ENCODE measurements at regions of chr6 and their contacts with region 1.

Region 1: DNA sequence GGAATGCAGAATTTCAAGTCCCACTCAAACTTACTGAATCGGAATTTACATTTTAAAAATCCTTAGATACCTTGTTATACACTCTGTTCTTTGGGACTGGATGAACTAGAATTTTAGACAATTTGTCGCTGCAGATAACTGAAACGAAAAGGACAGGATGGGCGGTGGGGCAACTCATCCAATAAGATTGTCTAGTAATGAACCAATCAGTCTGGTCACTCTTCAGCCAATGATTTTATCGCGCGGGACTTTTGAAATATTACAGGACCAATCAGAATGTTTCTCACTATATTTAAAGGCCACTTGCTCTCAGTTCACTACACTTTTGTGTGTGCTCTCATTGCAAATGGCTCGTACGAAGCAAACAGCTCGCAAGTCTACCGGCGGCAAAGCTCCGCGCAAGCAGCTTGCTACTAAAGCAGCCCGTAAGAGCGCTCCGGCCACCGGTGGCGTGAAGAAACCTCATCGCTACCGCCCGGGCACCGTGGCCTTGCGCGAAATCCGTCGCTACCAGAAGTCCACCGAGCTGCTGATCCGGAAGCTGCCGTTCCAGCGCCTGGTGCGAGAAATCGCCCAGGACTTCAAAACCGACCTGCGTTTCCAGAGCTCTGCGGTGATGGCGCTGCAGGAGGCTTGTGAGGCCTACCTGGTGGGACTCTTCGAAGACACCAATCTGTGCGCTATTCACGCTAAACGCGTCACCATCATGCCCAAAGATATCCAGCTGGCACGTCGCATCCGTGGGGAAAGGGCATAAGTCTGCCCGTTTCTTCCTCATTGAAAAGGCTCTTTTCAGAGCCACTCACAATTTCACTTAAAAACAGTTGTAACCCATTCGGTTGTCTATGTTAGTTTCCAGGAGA is 41.9 kb upstream of the HFE start:
- DNase-seq: peak; percentile 49 to 96 (median 74)
- ATAC-seq: peak; percentile 55
- H3K4me3 ChIP-seq: peak overlapping the region; percentile 70
- H3K4me3 Mint-ChIP-seq: peak overlapping the region; percentile 97
- H3K27ac ChIP-seq: peak overlapping the region; percentile 71 to 91
- H3K27ac Mint-ChIP-seq: peak overlapping the region; percentile 94
- H3K4me1 ChIP-seq: peaks cover 21% of the 10 kb centered on the region
- H3K4me1 Mint-ChIP-seq: peaks cover 28% of the 10 kb centered on the region
- H3K27me3 ChIP-seq: no peaks in the 10 kb centered on the region
- H3K27me3 Mint-ChIP-seq: no peaks in the 10 kb centered on the region
- CTCF ChIP-seq: no peak

Region 2: GRCh38 chr6:25576919-25577318 is 468.4 kb before region 1 on chr6:
- CTCF ChIA-PET with region 1: no interaction called
- POLR2A ChIA-PET with region 1: no interaction called
- intact Hi-C with region 1: no loop called
- DNase-seq: no peak
- ATAC-seq: no peak
- H3K4me3 ChIP-seq: no peak overlapping the region
- H3K4me3 Mint-ChIP-seq: no peak overlapping the region
- H3K27ac ChIP-seq: no peak overlapping the region
- H3K27ac Mint-ChIP-seq: no peak overlapping the region
- H3K4me1 ChIP-seq: peaks cover 5% of the 10 kb centered on the region
- H3K4me1 Mint-ChIP-seq: peaks cover 10% of the 10 kb centered on the region
- H3K27me3 ChIP-seq: no peaks in the 10 kb centered on the region
- H3K27me3 Mint-ChIP-seq: no peaks in the 10 kb centered on the region
- CTCF ChIP-seq: no peak

Region 3: GRCh38 chr6:26020329-26021000 is 24.8 kb before region 1 on chr6:
- CTCF ChIA-PET with region 1: interaction called, 40 read pairs
- POLR2A ChIA-PET with region 1: interaction called, 919 read pairs
- intact Hi-C with region 1: no loop called
- DNase-seq: peak; percentile 63 to 96 (median 78)
- ATAC-seq: peak; percentile 50
- H3K4me3 ChIP-seq: peak overlapping the region; percentile 73
- H3K4me3 Mint-ChIP-seq: peak overlapping the region; percentile 95
- H3K27ac ChIP-seq: peak overlapping the region; percentile 95 to 96
- H3K27ac Mint-ChIP-seq: peak overlapping the region; percentile 97
- H3K4me1 ChIP-seq: peaks cover 38% of the 10 kb centered on the region
- H3K4me1 Mint-ChIP-seq: peaks cover 41% of the 10 kb centered on the region
- H3K27me3 ChIP-seq: no peaks in the 10 kb centered on the region
- H3K27me3 Mint-ChIP-seq: no peaks in the 10 kb centered on the region
- CTCF ChIP-seq: no peak

Region 4: DNA sequence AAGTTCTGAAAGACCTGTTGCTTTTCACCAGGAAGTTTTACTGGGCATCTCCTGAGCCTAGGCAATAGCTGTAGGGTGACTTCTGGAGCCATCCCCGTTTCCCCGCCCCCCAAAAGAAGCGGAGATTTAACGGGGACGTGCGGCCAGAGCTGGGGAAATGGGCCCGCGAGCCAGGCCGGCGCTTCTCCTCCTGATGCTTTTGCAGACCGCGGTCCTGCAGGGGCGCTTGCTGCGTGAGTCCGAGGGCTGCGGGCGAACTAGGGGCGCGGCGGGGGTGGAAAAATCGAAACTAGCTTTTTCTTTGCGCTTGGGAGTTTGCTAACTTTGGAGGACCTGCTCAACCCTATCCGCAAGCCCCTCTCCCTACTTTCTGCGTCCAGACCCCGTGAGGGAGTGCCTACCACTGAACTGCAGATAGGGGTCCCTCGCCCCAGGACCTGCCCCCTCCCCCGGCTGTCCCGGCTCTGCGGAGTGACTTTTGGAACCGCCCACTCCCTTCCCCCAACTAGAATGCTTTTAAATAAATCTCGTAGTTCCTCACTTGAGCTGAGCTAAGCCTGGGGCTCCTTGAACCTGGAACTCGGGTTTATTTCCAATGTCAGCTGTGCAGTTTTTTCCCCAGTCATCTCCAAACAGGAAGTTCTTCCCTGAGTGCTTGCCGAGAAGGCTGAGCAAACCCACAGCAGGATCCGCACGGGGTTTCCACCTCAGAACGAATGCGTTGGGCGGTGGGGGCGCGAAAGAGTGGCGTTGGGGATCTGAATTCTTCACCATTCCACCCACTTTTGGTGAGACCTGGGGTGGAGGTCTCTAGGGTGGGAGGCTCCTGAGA is 42.2 kb after region 1 on chr6 and contains the start of gene HFE:
- CTCF ChIA-PET with region 1: no interaction called
- POLR2A ChIA-PET with region 1: interaction called, 27 read pairs
- intact Hi-C with region 1: no loop called
- DNase-seq: peak in 11 of 14 experiments; percentile 3 to 57 (median 21)
- ATAC-seq: peak; percentile 25
- H3K4me3 ChIP-seq: peak within 1 kb of the TSS; percentile 86
- H3K4me3 Mint-ChIP-seq: peak within 1 kb of the TSS; percentile 87
- H3K27ac ChIP-seq: peak within 1 kb of the TSS; percentile 23 to 61
- H3K27ac Mint-ChIP-seq: peak within 1 kb of the TSS; percentile 71
- H3K4me1 ChIP-seq: peaks cover 33% of the 10 kb centered on the region
- H3K4me1 Mint-ChIP-seq: peaks cover 34% of the 10 kb centered on the region
- H3K27me3 ChIP-seq: no peaks in the 10 kb centered on the region
- H3K27me3 Mint-ChIP-seq: no peaks in the 10 kb centered on the region
- CTCF ChIP-seq: no peak
- total RNA-seq, gene HFE: 0.08 to 0.28 TPM

Region 5: DNA sequence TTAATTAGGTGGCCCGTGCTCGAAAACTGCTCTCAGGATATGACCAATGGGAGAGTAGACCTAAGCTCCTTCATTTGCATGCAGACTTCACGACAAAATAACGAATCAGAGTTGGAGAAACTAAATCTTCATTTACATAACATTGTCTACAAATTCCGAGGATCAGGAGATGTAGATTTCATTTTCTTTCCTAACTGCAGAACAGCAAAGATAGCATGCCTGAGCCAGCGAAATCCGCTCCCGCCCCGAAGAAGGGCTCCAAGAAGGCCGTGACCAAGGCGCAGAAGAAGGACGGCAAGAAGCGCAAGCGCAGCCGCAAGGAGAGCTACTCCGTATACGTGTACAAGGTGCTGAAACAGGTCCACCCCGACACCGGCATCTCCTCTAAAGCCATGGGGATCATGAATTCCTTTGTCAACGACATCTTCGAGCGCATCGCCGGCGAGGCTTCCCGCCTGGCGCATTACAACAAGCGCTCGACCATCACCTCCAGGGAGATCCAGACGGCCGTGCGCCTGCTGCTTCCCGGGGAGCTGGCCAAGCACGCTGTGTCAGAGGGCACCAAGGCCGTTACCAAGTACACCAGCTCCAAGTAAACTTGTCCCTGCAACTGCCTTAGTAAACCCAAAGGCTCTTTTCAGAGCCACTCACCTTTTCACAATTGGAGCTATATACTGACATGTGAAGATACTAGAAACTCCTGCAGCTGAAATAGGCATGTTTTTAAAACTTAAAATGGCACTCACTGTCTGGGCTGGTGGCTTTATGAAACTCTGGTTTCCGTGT is 138.5 kb after region 1 on chr6:
- CTCF ChIA-PET with region 1: interaction called, 4 read pairs
- POLR2A ChIA-PET with region 1: interaction called, 25 read pairs
- intact Hi-C with region 1: no loop called
- DNase-seq: peak in 13 of 14 experiments; percentile 20 to 94 (median 48)
- ATAC-seq: peak; percentile 89
- H3K4me3 ChIP-seq: peak overlapping the region; percentile 62
- H3K4me3 Mint-ChIP-seq: peak overlapping the region; percentile 99
- H3K27ac ChIP-seq: peak overlapping the region; percentile 43 to 72
- H3K27ac Mint-ChIP-seq: peak overlapping the region; percentile 86
- H3K4me1 ChIP-seq: peaks cover 34% of the 10 kb centered on the region
- H3K4me1 Mint-ChIP-seq: peaks cover 42% of the 10 kb centered on the region
- H3K27me3 ChIP-seq: no peaks in the 10 kb centered on the region
- H3K27me3 Mint-ChIP-seq: no peaks in the 10 kb centered on the region
- CTCF ChIP-seq: no peak

Region 6: GRCh38 chr6:26249957-26250697 is 204.8 kb after region 1 on chr6:
- CTCF ChIA-PET with region 1: interaction called, 3 read pairs
- POLR2A ChIA-PET with region 1: interaction called, 23 read pairs
- intact Hi-C with region 1: no loop called
- DNase-seq: peak; percentile 64 to 93 (median 74)
- ATAC-seq: peak; percentile 78
- H3K4me3 ChIP-seq: peak overlapping the region; percentile 75
- H3K4me3 Mint-ChIP-seq: peak overlapping the region; percentile 97
- H3K27ac ChIP-seq: peak overlapping the region; percentile 72 to 80
- H3K27ac Mint-ChIP-seq: peak overlapping the region; percentile 88
- H3K4me1 ChIP-seq: peaks cover 29% of the 10 kb centered on the region
- H3K4me1 Mint-ChIP-seq: peaks cover 44% of the 10 kb centered on the region
- H3K27me3 ChIP-seq: no peaks in the 10 kb centered on the region
- H3K27me3 Mint-ChIP-seq: no peaks in the 10 kb centered on the region
- CTCF ChIP-seq: no peak

Region 7: DNA sequence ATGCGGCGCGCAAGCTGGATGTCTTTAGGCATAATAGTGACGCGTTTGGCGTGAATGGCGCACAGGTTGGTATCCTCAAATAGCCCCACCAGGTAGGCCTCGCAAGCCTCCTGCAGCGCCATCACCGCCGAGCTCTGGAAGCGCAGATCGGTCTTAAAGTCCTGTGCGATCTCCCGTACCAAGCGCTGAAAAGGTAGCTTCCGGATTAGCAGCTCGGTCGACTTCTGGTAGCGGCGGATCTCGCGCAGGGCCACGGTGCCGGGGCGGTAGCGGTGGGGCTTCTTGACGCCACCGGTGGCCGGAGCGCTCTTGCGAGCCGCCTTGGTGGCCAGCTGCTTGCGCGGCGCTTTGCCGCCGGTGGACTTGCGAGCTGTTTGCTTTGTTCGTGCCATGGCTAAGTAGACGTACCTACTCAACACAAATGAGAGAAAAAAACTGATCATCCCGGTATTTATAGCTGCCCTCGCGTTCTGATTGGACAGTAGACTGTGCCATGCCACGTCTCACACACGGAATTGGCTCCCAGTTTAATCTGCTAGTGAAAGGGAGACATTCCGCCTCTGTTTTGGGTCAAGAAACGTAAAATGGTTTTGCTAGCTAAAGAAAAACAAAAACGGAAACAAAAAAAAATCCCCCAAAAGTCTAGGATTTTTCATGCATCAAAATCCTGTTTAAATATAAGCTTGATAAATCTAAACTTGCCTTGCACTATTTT is 1826.8 kb after region 1 on chr6:
- CTCF ChIA-PET with region 1: no interaction called
- POLR2A ChIA-PET with region 1: interaction called, 17 read pairs
- intact Hi-C with region 1: no loop called
- DNase-seq: peak; percentile 71 to 97 (median 82)
- ATAC-seq: peak; percentile 75
- H3K4me3 ChIP-seq: peak overlapping the region; percentile 86
- H3K4me3 Mint-ChIP-seq: peak overlapping the region; percentile 93
- H3K27ac ChIP-seq: peak overlapping the region; percentile 89
- H3K27ac Mint-ChIP-seq: peak overlapping the region; percentile 93
- H3K4me1 ChIP-seq: peaks cover 39% of the 10 kb centered on the region
- H3K4me1 Mint-ChIP-seq: peaks cover 41% of the 10 kb centered on the region
- H3K27me3 ChIP-seq: no peaks in the 10 kb centered on the region
- H3K27me3 Mint-ChIP-seq: no peaks in the 10 kb centered on the region
- CTCF ChIP-seq: peak; percentile 43

Measured in CD4-positive, alpha-beta T cell (primary cell).